T-cell (primary cell): ENCODE measurements at regions of chr11 and their contacts with region 1.

Region 1: DNA sequence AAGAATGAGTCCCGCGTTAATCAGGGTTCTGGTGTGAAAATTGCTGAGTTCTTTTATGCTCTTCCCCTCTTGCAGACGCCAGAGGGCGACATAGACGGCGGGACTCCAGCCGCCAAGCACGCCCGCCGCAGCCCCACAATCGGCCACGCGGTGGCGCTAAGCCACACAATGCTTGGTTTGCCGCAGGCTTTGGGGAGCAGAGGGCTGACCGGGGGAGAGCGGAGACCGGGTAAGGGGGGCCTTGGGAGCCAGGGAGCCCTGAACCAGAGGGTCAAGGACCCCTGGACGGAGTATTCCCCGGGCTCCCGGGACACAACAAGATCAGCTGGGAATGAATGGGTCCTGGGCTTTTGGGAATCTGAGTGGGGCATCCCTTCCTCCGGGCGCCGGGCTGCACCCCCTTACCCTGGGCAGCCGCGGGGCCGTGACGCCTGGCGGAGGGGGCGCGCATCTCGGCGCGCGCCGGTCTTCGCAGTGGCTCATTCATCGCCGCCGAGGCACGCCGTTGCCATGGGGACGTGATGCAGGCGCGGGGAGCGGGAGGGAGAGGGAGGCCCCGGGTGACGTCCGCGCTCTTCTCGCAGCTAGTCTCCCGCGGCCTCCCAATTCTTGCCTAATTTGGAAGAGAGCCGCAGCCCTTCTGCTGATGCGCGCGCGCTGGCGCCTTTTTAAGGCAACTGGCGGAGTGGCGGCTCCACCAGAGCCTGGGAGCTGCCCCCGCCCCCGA is 12.2 kb upstream of the NPAS4 start:
- DNase-seq: peak; percentile 74 to 97 (median 88)
- ATAC-seq: peak; percentile 88 to 93 (median 90)
- H3K4me3 ChIP-seq: peak overlapping the region; percentile 21 to 49
- H3K4me3 Mint-ChIP-seq: peak overlapping the region; percentile 69 to 81 (median 79)
- H3K27ac ChIP-seq: no peak overlapping the region
- H3K27ac Mint-ChIP-seq: no peak overlapping the region
- H3K4me1 ChIP-seq: peaks cover 0 to 15% of the 10 kb centered on the region in 2 experiments
- H3K4me1 Mint-ChIP-seq: peaks cover 2 to 6% (median 3%) of the 10 kb centered on the region in 3 donors
- H3K27me3 ChIP-seq: peaks cover 3 to 59% of the 10 kb centered on the region in 2 experiments
- H3K27me3 Mint-ChIP-seq: peaks cover 32 to 35% of the 10 kb centered on the region in 2 donors

Region 2: GRCh38 chr11:66222358-66223149 is 186.1 kb before region 1 on chr11:
- CTCF ChIA-PET with region 1: no interaction called
- POLR2A ChIA-PET with region 1: interaction called in 1 of 2 experiments, 12 read pairs
- DNase-seq: peak; percentile 76 to 99 (median 93)
- ATAC-seq: peak; percentile 93 to 98 (median 96)
- H3K4me3 ChIP-seq: no peak overlapping the region
- H3K4me3 Mint-ChIP-seq: no peak overlapping the region
- H3K27ac ChIP-seq: peak overlapping the region; percentile 93
- H3K27ac Mint-ChIP-seq: peak overlapping the region; percentile 80 to 86
- H3K4me1 ChIP-seq: peaks cover 2 to 13% of the 10 kb centered on the region in 2 experiments
- H3K4me1 Mint-ChIP-seq: peaks cover 11 to 20% (median 14%) of the 10 kb centered on the region in 3 donors
- H3K27me3 ChIP-seq: no peaks in the 10 kb centered on the region
- H3K27me3 Mint-ChIP-seq: no peaks in the 10 kb centered on the region

Region 3: GRCh38 chr11:66386171-66387069 is 22.2 kb before region 1 on chr11:
- CTCF ChIA-PET with region 1: no interaction called
- POLR2A ChIA-PET with region 1: no interaction called
- DNase-seq: peak; percentile 51 to 89 (median 77)
- ATAC-seq: peak; percentile 68 to 78 (median 71)
- H3K4me3 ChIP-seq: peak overlapping the region in 1 of 2 donors; percentile 4
- H3K4me3 Mint-ChIP-seq: peak overlapping the region in 2 of 3 donors; percentile 3 to 17
- H3K27ac ChIP-seq: no peak overlapping the region
- H3K27ac Mint-ChIP-seq: no peak overlapping the region
- H3K4me1 ChIP-seq: peaks cover 0 to 12% of the 10 kb centered on the region in 2 experiments
- H3K4me1 Mint-ChIP-seq: peaks cover 6 to 8% (median 6%) of the 10 kb centered on the region in 3 donors
- H3K27me3 ChIP-seq: peaks cover 2 to 29% of the 10 kb centered on the region in 2 experiments
- H3K27me3 Mint-ChIP-seq: peaks cover 0 to 2% of the 10 kb centered on the region in 2 donors

Region 4: DNA sequence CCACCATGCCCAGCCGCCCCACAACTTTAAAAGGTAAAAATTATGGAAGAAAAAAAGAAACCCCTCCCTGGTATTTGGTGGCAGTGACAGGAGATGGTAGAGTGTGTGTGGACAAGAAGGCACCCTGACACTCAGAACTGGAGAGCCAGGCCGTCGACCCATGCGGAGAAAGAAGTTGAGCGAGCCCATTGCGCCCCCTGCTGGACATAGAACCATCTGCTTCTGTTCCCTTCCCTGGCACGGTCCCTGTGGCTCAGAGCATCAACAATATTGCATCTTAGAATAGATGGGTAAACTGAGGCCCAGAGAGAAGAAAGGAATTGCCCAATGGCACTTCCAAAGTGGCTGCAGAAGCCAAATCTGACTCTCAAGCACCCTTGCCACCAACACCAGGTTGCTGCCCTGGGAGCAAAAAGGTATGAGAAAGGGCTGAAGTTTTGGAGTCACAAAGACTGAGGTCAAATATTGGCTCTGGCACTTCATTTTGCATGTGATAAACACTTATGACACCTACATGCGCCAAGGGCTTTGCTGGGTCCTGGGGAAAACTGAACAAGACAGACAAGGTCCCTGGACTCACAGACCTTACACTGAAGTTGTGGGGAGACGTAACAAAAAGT is 21.4 kb after region 1 on chr11:
- CTCF ChIA-PET with region 1: no interaction called
- POLR2A ChIA-PET with region 1: no interaction called
- DNase-seq: peak; percentile 14 to 85 (median 59)
- ATAC-seq: peak; percentile 54 to 79 (median 68)
- H3K4me3 ChIP-seq: no peak overlapping the region
- H3K4me3 Mint-ChIP-seq: no peak overlapping the region
- H3K27ac ChIP-seq: no peak overlapping the region
- H3K27ac Mint-ChIP-seq: no peak overlapping the region
- H3K4me1 ChIP-seq: no peaks in the 10 kb centered on the region
- H3K4me1 Mint-ChIP-seq: peaks cover 0 to 2% (median 0%) of the 10 kb centered on the region in 3 donors
- H3K27me3 ChIP-seq: peaks cover 0 to 11% of the 10 kb centered on the region in 2 experiments
- H3K27me3 Mint-ChIP-seq: no peaks in the 10 kb centered on the region

Region 5: GRCh38 chr11:66510271-66510989 is 101.8 kb after region 1 on chr11 and contains the start of gene BBS1:
- CTCF ChIA-PET with region 1: no interaction called
- POLR2A ChIA-PET with region 1: interaction called in 1 of 2 experiments, 11 read pairs
- DNase-seq: peak; percentile 62 to 88 (median 77)
- ATAC-seq: peak; percentile 97 to 99 (median 98)
- H3K4me3 ChIP-seq: peak within 1 kb of the TSS; percentile 60 to 90
- H3K4me3 Mint-ChIP-seq: peak within 1 kb of the TSS; percentile 86 to 88 (median 87)
- H3K27ac ChIP-seq: no peak within 1 kb of the TSS
- H3K27ac Mint-ChIP-seq: peak within 1 kb of the TSS; percentile 46 to 69
- H3K4me1 ChIP-seq: peaks cover 7 to 13% of the 10 kb centered on the region in 2 experiments
- H3K4me1 Mint-ChIP-seq: peaks cover 15 to 19% (median 17%) of the 10 kb centered on the region in 3 donors
- H3K27me3 ChIP-seq: no peaks in the 10 kb centered on the region
- H3K27me3 Mint-ChIP-seq: no peaks in the 10 kb centered on the region
- total RNA-seq, gene BBS1: 17.0 to 41.6 (median 34.9) TPM